A549 (cell line): ENCODE measurements at regions of chr19 and their contacts with region 1.

Region 1: DNA sequence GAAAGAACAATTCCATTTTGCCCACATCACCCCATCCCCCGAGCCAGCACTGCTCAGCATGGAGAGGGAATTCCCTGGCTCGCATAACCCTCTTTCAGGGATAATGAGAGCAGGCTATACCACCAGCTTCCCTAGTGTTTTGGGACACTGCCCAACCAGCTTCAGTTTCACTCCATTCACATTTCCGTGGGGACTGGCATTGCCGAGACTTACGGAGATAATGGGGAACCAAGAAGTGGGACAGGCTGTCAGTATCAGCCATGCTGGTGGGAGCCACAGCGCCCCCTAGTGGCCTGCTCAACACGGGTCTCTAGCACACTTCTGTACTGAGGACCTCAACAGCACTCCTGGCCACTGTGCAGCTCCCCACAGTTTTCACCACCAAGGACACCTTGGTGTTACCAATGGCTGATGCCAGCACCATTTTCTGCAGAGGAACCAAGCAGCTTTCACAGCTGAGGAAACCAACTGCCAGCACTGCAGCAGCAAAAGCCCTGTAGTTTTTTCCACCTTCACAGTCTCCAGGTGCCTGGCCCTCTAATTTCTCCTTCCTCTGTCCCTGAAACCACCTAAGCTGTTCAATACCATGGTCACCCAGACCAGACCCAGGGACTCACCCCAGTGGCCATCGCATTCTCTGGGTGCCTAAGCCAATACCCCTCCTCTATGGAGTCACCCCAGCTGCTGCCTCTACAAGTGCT is 23.7 kb downstream of the SLC6A16 start:
- DNase-seq: peak; percentile 78 to 91
- ATAC-seq: peak; percentile 99 to 100
- H3K4me3 ChIP-seq: peak overlapping the region; percentile 29; the same call in 1 of the 3 replicates
- H3K27ac ChIP-seq: no peak overlapping the region
- H3K4me1 ChIP-seq: no peaks in the 10 kb centered on the region
- CTCF ChIP-seq: peak; percentile 92
- EP300 ChIP-seq: no peak
- POLR2A ChIP-seq: no peak
- RAD21 ChIP-seq: peak; percentile 41 to 57; a peak in 4 of 5 replicates

Region 2: DNA sequence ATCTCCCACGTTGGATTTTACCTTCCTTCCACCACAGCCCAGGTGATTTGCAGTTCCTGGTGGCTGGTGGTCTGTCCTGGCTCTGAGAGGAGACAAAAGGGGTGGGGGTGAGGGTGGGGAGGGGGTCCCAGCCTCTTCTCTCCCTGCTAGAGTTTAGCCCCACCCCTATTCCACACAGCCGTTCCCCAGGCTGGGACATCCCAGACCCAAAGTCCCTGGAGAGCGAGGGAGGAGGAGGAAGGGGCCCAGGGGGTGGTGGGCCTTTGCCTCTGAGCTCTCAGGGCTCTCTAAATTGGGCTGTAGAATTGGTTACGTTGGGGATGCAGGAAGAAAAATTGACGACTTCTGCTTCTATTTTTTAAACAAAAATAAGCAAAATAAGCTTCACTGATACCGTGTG is 58.2 kb before region 1 on chr19:
- CTCF ChIA-PET with region 1: interaction called, 12 read pairs
- POLR2A ChIA-PET with region 1: no interaction called
- DNase-seq: no peak
- ATAC-seq: no peak
- H3K4me3 ChIP-seq: no peak overlapping the region
- H3K27ac ChIP-seq: no peak overlapping the region
- H3K4me1 ChIP-seq: no peaks in the 10 kb centered on the region
- CTCF ChIP-seq: no peak
- EP300 ChIP-seq: no peak
- POLR2A ChIP-seq: no peak
- RAD21 ChIP-seq: no peak

Region 3: GRCh38 chr19:49264258-49264657 is 37.1 kb before region 1 on chr19:
- CTCF ChIA-PET with region 1: interaction called, 22 read pairs
- POLR2A ChIA-PET with region 1: no interaction called
- DNase-seq: no peak
- ATAC-seq: no peak
- H3K4me3 ChIP-seq: no peak overlapping the region
- H3K27ac ChIP-seq: no peak overlapping the region
- H3K4me1 ChIP-seq: no peaks in the 10 kb centered on the region
- CTCF ChIP-seq: no peak
- EP300 ChIP-seq: no peak
- POLR2A ChIP-seq: no peak
- RAD21 ChIP-seq: no peak

Region 4: GRCh38 chr19:49282184-49282583 is 19.1 kb before region 1 on chr19:
- CTCF ChIA-PET with region 1: interaction called, 46 read pairs
- POLR2A ChIA-PET with region 1: no interaction called
- DNase-seq: no peak
- ATAC-seq: no peak
- H3K4me3 ChIP-seq: no peak overlapping the region
- H3K27ac ChIP-seq: no peak overlapping the region
- H3K4me1 ChIP-seq: no peaks in the 10 kb centered on the region
- CTCF ChIP-seq: no peak
- EP300 ChIP-seq: no peak
- POLR2A ChIP-seq: no peak
- RAD21 ChIP-seq: no peak

Region 5: GRCh38 chr19:49315111-49315510 is 13.8 kb after region 1 on chr19:
- CTCF ChIA-PET with region 1: interaction called, 34 read pairs
- POLR2A ChIA-PET with region 1: no interaction called
- DNase-seq: no peak
- ATAC-seq: no peak
- H3K4me3 ChIP-seq: no peak overlapping the region
- H3K27ac ChIP-seq: no peak overlapping the region
- H3K4me1 ChIP-seq: no peaks in the 10 kb centered on the region
- CTCF ChIP-seq: no peak
- EP300 ChIP-seq: no peak
- POLR2A ChIP-seq: no peak
- RAD21 ChIP-seq: no peak

Region 6: GRCh38 chr19:49340069-49340864 is 39.0 kb after region 1 on chr19:
- CTCF ChIA-PET with region 1: interaction called, 17 read pairs
- POLR2A ChIA-PET with region 1: no interaction called
- DNase-seq: no peak
- ATAC-seq: peak in 1 of 2 experiments; percentile 11; a peak in 2 of 6 replicates
- H3K4me3 ChIP-seq: no peak overlapping the region
- H3K27ac ChIP-seq: no peak overlapping the region
- H3K4me1 ChIP-seq: no peaks in the 10 kb centered on the region
- CTCF ChIP-seq: no peak
- EP300 ChIP-seq: no peak
- POLR2A ChIP-seq: no peak
- RAD21 ChIP-seq: no peak

Region 7: DNA sequence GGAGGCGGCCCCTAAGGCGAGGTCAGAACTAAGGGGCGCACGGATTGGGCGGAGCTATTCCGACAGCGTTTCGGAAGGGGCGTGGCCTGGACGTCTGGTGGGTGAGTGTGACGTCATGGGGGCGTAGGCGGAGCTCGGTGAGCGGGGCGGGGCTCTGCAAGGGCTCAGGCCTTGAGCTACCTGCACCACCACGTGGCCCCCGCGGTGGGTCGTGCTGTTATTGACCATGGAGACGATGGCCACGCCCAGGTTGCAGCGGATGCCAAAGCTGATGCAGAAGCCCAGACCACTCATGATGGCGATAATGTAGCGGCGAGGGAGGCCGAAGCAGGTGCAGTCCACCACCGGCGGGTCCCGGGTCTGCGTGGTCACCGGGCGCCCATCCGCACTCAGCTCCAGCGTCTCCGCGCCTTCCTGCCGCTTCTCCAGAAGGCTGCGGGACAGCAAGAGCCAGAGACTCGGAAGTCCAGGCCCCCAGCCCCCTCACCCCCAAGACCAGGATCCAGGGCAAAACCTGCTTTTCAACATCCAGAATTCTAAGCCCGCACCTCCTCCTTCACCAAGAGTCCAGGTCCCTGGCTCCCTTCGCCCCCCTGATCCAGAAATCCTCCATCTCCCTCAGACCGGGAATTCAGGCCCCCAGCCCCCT is 135.2 kb after region 1 on chr19:
- CTCF ChIA-PET with region 1: no interaction called
- POLR2A ChIA-PET with region 1: no interaction called
- DNase-seq: peak in 1 of 2 experiments; percentile 64
- ATAC-seq: peak; percentile 14 to 15; a peak in 3 of 6 replicates
- H3K4me3 ChIP-seq: no peak overlapping the region
- H3K27ac ChIP-seq: no peak overlapping the region
- H3K4me1 ChIP-seq: peaks cover 8% of the 10 kb centered on the region
- CTCF ChIP-seq: no peak
- EP300 ChIP-seq: no peak
- POLR2A ChIP-seq: no peak
- RAD21 ChIP-seq: no peak